Sciatic nerve (tissue), 2 donors: ENCODE measurements at regions of chr7 and their contacts with region 1.

Region 1: DNA sequence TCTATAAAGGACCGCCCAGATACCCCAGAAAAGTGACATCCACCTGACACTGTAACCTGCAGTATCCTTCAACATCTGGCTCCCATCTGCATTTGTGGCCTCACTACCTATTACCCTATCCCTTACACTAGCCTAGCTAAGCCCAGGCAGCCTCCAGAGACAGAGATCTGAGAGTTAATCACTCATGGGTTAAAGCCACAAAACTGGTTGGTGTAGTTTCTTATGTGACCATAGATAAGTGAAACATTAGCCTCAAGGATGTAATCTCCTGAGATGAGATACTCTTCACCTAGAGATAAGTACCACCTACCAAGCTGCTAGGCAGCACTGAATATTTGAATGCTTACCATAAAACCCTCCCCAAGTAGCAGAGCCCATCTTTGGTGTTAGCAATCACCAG is 35.4 kb downstream of the CTTNBP2 start:
- DNase-seq: no peak
- ATAC-seq: no peak

Region 2: DNA sequence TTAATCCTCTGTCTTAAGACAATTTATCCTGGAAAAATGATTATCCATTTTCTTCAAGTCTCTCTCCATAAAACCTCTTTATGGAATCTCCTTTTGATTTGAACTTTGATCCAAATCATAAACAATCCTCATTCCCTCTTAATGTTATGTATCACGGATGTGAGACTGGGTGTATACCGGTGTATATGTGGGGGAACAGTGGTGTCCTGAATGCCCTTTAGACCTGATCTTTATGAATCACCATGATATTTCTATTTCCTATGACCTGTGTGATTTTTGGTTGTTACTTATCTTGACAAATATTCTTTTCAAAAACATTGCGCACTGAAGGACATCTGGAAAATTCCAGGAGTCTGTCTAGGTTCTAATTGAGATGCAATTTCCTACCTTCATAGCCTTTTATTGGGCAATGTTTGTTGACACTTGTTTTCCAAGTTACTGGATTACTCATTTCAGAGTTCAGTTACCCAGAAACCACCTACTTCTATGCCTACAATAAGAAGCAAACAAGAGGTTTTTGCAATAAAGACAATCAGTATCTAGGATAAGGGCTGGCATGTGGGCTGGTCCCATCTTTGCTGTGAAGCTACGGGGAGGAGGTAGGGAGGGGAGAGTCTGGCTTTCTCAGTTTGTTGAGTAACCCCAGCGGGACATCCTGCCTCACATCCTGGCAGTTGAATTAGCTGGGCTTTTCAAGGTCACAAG is 155.0 kb before region 1 on chr7:
- intact Hi-C with region 1: no loop called
- DNase-seq: no peak
- ATAC-seq: no peak

Region 3: DNA sequence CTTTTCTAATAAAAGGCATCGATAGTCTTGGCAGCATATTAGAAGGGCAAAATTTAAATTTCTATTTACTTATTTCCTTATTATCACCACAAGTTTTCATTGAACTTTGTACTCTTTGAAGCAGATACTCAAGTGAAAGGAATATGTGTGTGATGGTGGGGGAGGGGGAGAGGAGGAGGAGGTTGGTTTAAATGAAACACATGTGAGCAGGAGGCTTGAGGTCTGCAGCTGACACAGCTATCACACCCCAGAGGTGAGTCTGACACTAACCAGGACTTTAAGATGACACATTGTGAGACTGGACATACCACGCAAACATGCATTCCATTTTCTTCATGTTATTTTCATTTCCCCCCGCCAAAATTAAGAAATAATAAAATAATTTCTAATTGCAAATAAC is 27.9 kb before region 1 on chr7:
- intact Hi-C with region 1: no loop called
- DNase-seq: no peak
- ATAC-seq: no peak

Region 4: GRCh38 chr7:118169146-118169545 is 331.3 kb after region 1 on chr7:
- intact Hi-C with region 1: no loop called
- DNase-seq: no peak
- ATAC-seq: no peak

Region 5: GRCh38 chr7:118708741-118709140 is 870.9 kb after region 1 on chr7:
- intact Hi-C with region 1: loop called (anchors 10 kb)
- DNase-seq: no peak
- ATAC-seq: peak; percentile 72